AG04449 (cell line): ENCODE measurements at regions of chr16 and their contacts with region 1.

Region 1: DNA sequence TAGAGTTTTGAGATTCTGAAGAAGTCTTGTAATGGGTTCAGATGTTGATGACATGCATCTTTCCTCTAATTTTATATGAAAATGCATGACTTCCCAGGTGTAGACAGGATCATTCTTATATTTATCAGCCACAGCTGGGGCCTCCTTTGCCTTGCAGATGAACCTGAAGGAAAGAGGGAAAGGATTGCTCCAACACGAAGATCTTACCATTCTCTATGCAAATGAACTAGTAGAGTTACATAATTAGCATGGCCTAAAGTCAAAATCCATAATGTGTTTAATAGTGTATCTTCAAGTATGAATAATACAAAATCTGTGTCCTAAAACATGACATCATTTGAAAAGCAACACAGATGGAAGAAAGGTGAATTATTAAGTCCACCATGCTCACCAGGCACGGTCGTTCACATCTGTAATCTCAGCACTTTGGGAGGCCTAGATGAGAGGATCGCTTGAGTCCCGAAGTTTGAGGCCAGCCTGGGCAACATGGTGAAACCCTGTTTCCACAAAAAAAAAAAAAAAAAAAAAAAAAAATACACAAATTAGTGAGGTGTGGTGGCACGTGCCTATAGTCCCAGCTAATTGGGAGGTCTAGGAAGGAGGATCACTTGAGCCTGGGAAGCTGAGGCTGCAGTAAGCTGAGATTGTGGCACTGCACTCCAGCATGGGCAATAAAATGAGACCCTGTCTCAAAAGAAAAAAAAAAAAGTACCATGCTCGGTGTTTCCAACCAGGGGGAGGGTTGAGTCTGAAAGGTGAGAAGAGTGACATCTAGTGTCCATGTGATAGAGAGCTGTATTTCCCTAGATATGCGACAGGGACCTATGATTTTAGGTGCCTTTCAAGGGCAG is 6.3 kb downstream of the VWA3A start:
- DNase-seq: no peak
- H3K4me3 ChIP-seq: no peak overlapping the region
- CTCF ChIP-seq: peak; percentile 57

Region 2: GRCh38 chr16:21989133-21989532 is 109.5 kb before region 1 on chr16:
- CTCF ChIA-PET with region 1: interaction called, 13 read pairs
- POLR2A ChIA-PET with region 1: interaction called, 4 read pairs
- DNase-seq: peak; percentile 16
- H3K4me3 ChIP-seq: no peak overlapping the region
- CTCF ChIP-seq: no peak

Region 3: DNA sequence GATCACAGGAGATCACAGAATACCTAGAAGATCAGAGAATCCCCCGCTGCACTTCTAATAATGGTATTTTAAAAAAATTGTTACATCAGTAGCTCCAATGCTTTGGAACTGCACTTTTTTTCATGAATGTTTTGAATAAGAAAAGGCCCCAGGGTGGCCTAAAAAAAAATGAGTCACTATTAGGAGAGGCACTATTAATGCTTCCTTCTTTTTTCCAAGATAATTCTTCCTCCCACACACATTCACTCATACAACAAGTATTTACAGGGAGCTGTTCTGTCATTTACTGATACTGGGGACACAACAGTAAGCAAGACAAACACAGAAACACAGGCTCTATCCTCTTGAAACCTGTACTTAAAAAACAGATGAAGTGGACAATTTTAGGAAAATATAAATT is 97.0 kb before region 1 on chr16:
- CTCF ChIA-PET with region 1: interaction called, 110 read pairs
- POLR2A ChIA-PET with region 1: no interaction called
- DNase-seq: peak; percentile 12
- H3K4me3 ChIP-seq: no peak overlapping the region
- CTCF ChIP-seq: no peak

Region 4: DNA sequence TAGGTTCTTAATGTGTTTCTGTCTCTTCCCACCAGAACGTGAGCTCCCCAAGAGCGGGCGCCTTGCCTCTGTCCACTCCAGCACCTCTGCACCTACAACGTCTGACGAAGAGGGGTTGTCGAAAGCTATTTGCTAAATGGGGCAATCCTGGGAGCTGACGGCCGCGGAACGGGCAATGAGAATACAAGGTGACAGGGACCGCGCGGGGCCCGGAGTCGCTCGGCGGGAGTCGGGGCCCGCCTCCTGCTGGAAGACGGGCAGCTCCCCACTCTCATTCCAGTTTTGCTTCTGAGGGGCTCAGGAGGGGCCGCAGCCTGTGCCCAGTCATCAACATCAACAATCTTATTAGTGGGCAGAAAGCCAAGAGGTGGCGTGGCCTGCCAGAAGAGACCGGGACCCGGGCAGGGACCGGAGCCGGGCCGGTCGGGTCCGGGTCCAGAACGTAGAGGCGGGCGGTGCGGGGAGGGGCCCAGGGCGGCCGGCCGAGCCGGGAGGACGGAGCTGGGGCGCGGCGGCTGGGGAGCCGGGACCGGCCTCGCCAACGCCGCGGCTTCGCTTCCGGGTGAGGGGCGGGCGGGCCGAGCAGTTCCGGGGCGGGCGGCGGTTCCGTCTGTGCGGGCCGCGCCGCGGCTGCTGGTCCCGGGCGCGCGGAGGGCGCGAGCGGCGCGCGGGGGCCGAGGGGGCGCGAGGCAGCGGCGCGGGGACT is 91.0 kb before region 1 on chr16 and contains the start of gene MOSMO:
- CTCF ChIA-PET with region 1: interaction called, 110 read pairs
- POLR2A ChIA-PET with region 1: no interaction called
- DNase-seq: no peak
- H3K4me3 ChIP-seq: peak within 1 kb of the TSS; percentile 80
- CTCF ChIP-seq: no peak

Region 5: DNA sequence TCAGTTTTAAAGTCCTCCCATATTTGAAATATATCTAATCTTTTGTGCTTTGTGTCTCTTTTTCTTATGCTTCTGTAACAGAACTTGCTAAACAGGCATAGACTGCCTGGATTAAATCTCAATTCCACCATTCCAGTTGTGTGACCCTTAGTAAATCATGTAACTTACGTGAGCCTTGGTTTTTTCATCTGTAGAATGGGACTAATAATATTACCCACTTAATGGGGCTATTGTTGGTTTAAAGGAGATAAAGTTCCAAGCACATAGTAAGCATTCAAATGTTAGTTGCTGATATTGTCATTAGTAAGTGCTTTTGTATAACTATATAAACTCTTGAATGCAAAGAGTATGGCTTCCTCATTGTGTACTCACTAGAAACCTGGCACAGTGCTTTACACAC is 12.2 kb before region 1 on chr16:
- CTCF ChIA-PET with region 1: interaction called, 37 read pairs
- POLR2A ChIA-PET with region 1: no interaction called
- DNase-seq: no peak
- H3K4me3 ChIP-seq: no peak overlapping the region
- CTCF ChIP-seq: no peak

Region 6: GRCh38 chr16:22109258-22109898 is 10.7 kb after region 1 on chr16:
- CTCF ChIA-PET with region 1: interaction called, 18 read pairs
- POLR2A ChIA-PET with region 1: no interaction called
- DNase-seq: no peak
- H3K4me3 ChIP-seq: no peak overlapping the region
- CTCF ChIP-seq: no peak

Region 7: GRCh38 chr16:22124583-22125284 is 26.1 kb after region 1 on chr16:
- CTCF ChIA-PET with region 1: no interaction called
- POLR2A ChIA-PET with region 1: no interaction called
- DNase-seq: no peak
- H3K4me3 ChIP-seq: no peak overlapping the region
- CTCF ChIP-seq: no peak

Region 8: GRCh38 chr16:22141746-22142145 is 43.1 kb after region 1 on chr16:
- CTCF ChIA-PET with region 1: interaction called, 11 read pairs
- POLR2A ChIA-PET with region 1: no interaction called
- DNase-seq: no peak
- H3K4me3 ChIP-seq: no peak overlapping the region
- CTCF ChIP-seq: peak; percentile 39